Activated CD4-positive, alpha-beta T cell treated with anti-CD3 and anti-CD28 coated beads for 36 hours (primary cell): ENCODE measurements at regions of chr20 and their contacts with region 1.

Region 1: DNA sequence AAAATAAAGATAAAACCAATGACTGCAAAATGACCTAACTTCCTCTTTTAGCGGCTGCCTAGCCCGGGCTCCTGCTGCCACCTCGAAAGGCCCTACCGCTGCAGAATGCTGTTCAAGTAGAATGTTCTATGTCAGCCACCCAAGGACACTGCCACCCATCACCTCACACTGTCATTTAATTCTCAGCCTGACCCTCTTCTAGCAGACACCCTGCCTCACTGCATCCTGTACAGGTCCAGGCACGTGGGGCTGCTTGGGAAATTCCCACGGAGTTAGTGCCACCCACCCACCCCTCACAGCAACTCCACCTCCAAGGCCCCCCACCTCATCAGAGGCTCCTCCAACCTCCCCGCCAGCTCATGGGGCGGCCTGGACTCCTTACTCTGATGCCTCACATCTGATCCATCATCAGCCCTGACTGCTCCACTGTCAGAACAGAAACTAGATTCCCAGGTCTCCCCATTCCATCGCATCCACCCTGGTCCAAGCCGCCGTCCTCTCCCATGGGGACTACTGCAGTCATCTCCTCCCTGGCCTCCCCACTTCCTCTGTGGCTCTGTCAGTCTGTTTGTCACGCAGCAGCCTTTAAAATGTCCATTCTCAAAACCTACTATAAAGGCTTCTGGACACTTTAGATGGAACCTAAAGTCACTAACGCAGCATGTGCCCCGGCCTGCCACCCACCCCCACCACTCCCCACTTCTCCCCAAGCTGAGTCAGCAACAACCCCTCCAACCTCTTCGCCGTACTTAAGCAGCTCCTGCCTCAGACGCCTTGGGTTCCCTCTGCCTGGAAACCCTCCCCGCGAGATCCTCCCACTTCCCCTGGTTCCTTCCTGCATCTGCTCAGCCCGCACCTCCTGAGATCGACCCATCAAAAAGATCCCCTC is 17.0 kb downstream of the NFATC2 start:
- DNase-seq: peak; percentile 72
- ATAC-seq: peak; percentile 42
- H3K4me3 Mint-ChIP-seq: peak overlapping the region; percentile 69
- H3K27ac Mint-ChIP-seq: peak overlapping the region; percentile 93
- H3K4me1 Mint-ChIP-seq: peaks cover 83% of the 10 kb centered on the region
- H3K27me3 Mint-ChIP-seq: no peaks in the 10 kb centered on the region

Region 2: DNA sequence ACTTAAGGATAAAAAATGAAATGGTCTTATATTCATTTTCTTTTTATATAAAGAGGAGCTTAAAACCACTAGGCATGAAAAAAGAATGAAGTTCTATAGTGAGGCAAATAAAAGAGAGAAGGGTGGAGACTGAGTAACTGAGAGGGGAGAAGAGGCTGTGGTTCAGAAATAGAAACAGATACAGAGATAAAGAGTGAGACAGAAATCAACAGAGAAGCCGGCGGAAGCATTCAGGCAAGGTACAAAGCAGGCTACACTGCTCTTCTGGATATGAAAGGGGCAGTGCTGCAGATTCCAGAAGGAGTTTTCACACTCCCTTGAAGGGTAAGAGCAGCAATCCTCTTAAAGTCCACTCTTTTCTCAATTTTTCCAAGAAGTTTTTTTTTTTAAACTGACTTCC is 12.8 kb before region 1 on chr20:
- CTCF ChIA-PET with region 1: interaction called, 5 read pairs
- POLR2A ChIA-PET with region 1: no interaction called
- intact Hi-C with region 1: loop called (anchors 1 kb)
- DNase-seq: peak; percentile 52
- ATAC-seq: peak; percentile 92
- H3K4me3 Mint-ChIP-seq: peak overlapping the region; percentile 20
- H3K27ac Mint-ChIP-seq: peak overlapping the region; percentile 89
- H3K4me1 Mint-ChIP-seq: peaks cover 78% of the 10 kb centered on the region
- H3K27me3 Mint-ChIP-seq: no peaks in the 10 kb centered on the region

Region 3: DNA sequence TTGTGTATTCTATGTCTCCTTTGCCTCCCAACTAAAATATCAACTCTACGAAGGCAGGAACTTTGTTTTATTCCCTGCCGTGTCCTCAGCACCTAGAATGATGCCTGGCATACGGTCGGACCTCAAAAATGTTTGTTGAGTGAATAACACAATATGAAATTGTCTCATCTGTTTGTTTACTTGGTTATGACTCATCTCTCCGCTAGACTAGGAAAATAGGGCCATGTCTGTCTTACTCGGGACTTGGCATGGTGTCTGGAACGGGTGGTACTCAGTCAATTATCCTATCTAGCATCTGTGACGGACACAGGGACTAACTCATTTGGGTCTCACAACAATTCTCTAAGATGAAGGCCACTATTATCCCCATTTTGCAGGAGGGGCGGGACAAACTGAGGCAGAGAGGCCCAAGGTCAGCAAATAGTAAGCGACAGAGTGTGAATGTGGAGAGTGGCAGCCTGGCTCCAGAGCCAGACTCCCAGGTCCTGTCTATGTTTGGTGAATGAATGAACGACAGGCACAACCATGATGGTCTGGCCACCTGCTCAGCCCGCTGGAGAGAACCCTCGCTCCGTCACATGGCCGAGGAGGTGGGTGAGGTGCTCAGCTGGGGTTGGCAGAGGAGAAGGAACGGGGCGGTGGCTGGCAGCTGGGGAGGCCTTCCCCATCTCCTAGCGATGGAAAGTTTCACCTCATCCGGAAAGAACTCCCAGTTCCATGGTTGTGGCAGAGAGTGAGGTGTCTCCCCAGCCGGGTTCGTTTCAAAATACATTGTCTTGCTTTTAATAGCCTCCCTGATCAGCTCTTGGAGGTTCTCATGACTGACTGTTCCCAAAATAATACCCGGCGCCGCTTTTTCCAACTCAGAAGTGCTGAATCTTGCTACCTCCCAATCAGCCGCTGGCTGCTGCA is 44.6 kb after region 1 on chr20:
- CTCF ChIA-PET with region 1: interaction called, 3 read pairs
- POLR2A ChIA-PET with region 1: no interaction called
- intact Hi-C with region 1: loop called in 1 of 2 experiments (anchors 5 kb)
- DNase-seq: no peak
- ATAC-seq: no peak
- H3K4me3 Mint-ChIP-seq: no peak overlapping the region
- H3K27ac Mint-ChIP-seq: no peak overlapping the region
- H3K4me1 Mint-ChIP-seq: peaks cover 16% of the 10 kb centered on the region
- H3K27me3 Mint-ChIP-seq: peaks cover 8% of the 10 kb centered on the region